Activated CD4-positive, alpha-beta memory T cell treated with anti-CD3 and anti-CD28 coated beads, Interleukin-2, amount 10 ng/mL, durations not matched to agents 7 days and 5 days (primary cell): ENCODE measurements at regions of chr12 and their contacts with region 1.

Region 1: DNA sequence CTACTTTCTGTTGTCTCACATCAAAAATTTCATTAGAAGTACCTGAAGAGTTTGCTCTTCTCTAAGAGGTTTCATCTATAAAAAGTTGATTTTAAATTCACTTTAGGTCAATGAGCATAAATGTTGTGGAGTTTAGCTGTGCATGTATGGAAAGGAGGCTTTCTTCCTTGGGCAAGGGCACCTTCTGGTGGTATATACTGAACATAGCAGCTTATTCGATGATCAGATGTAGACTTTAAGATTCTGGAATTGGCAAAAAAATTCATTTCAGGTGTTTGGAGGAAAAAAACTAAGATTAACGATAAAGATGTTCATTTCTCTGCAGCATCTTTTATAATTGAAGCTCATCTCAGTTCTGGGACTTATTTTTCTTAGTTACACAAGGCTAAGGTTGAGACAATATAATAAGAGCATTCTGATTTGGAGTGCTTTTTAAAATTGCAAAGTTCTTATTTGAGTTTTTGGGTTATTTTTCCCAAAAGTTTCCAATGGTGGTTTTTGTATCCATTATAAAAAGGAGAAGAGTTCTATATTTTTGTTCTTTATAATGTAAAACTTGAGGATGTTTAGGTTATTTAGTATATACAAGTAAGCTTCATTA is 46.8 kb downstream of the TMEM117 start:
- DNase-seq: peak; percentile 23
- H3K4me3 Mint-ChIP-seq: no peak overlapping the region
- H3K27ac Mint-ChIP-seq: no peak overlapping the region
- H3K4me1 Mint-ChIP-seq: no peaks in the 10 kb centered on the region
- H3K27me3 Mint-ChIP-seq: no peaks in the 10 kb centered on the region

Region 2: GRCh38 chr12:43444940-43445564 is 437.6 kb before region 1 on chr12:
- CTCF ChIA-PET with region 1: interaction called, 12 read pairs
- POLR2A ChIA-PET with region 1: no interaction called
- DNase-seq: peak; percentile 54
- H3K4me3 Mint-ChIP-seq: no peak overlapping the region
- H3K27ac Mint-ChIP-seq: no peak overlapping the region
- H3K4me1 Mint-ChIP-seq: no peaks in the 10 kb centered on the region
- H3K27me3 Mint-ChIP-seq: peaks cover 2% of the 10 kb centered on the region

Region 3: GRCh38 chr12:43722621-43723020 is 160.1 kb before region 1 on chr12:
- CTCF ChIA-PET with region 1: no interaction called
- POLR2A ChIA-PET with region 1: no interaction called
- DNase-seq: no peak
- H3K4me3 Mint-ChIP-seq: no peak overlapping the region
- H3K27ac Mint-ChIP-seq: no peak overlapping the region
- H3K4me1 Mint-ChIP-seq: no peaks in the 10 kb centered on the region
- H3K27me3 Mint-ChIP-seq: no peaks in the 10 kb centered on the region

Region 4: DNA sequence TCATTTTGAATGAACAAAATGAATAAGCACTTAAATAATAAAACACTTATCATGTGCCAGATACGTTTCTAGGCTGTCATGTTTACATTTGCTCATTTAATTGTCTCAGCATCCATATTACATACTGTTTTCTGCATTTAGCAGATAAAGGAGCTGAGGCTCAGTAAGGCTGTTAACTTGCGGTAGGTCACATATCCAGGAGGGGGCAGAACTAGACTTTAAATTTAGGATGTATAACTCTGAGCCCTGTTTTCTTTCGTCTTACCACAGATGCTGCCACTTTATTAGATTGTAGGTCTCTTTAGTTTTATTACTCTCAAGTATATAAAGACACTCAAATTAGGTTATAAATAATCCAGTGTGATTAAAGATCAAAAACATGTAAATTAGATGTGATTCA is 106.2 kb before region 1 on chr12:
- CTCF ChIA-PET with region 1: interaction called, 29 read pairs
- POLR2A ChIA-PET with region 1: no interaction called
- DNase-seq: no peak
- H3K4me3 Mint-ChIP-seq: no peak overlapping the region
- H3K27ac Mint-ChIP-seq: no peak overlapping the region
- H3K4me1 Mint-ChIP-seq: peaks cover 1% of the 10 kb centered on the region
- H3K27me3 Mint-ChIP-seq: no peaks in the 10 kb centered on the region

Region 5: GRCh38 chr12:43872396-43872795 is 10.3 kb before region 1 on chr12:
- CTCF ChIA-PET with region 1: interaction called, 10 read pairs
- POLR2A ChIA-PET with region 1: no interaction called
- DNase-seq: no peak
- H3K4me3 Mint-ChIP-seq: no peak overlapping the region
- H3K27ac Mint-ChIP-seq: no peak overlapping the region
- H3K4me1 Mint-ChIP-seq: no peaks in the 10 kb centered on the region
- H3K27me3 Mint-ChIP-seq: no peaks in the 10 kb centered on the region